ENCODE measurements at regions of chr10 and their contacts with region 1.

Region 1: DNA sequence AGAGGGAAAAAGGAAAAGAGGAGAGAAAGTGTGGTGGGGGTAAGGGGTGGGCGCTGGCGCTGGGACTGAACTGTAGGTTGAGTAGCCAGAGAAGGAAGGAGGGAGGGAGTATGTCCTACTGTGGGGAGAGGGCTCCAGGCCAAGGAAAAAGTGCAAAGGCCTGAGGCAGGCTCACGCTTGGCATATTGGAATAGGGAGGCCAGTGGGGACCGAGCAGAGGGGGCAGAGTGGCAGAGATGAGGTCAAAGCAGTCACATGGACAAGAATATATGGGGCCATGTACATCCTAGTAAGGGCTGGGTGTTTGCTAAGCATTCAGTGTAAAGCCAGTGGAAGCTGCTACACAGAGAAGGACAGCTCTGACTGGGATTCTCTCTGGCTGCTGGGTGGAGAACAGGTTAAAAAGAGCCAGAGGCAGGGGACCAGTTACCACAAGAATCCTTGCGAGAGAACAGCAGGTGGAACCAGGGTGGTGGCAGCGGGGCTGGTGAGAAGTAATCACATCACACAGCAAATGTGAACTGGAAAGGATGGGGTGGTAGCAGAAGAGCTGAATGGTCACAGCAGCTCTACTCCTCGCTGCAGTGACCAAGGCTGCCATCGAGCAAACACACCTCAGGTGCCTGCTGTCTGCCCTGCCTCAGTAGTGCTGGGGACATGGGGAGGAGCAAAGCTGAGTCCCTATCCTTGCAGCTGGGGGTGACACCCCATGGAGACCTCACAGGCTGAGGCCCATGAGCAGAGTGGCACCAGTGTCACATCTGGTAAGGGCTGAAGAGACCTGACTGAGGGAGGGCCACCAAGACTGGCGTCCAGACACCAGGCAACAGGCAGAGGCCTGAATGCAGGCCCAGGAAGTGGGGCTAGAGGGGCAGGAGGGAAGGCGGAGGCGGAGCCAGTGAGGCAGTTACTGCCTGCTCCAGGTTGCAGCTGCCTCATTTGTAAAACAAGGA is 39.5 kb downstream of the FAM53B start:
- DNase-seq: no peak
- H3K4me3 ChIP-seq: no peak overlapping the region
- H3K4me3 Mint-ChIP-seq: no peak overlapping the region
- H3K27ac Mint-ChIP-seq: no peak overlapping the region
- H3K4me1 ChIP-seq: peaks cover 14% of the 10 kb centered on the region; the same call in 1 of the 2 replicates
- H3K4me1 Mint-ChIP-seq: peaks cover 12% of the 10 kb centered on the region
- H3K27me3 ChIP-seq: no peaks in the 10 kb centered on the region
- H3K27me3 Mint-ChIP-seq: no peaks in the 10 kb centered on the region
- CTCF ChIP-seq: no peak

Region 2: DNA sequence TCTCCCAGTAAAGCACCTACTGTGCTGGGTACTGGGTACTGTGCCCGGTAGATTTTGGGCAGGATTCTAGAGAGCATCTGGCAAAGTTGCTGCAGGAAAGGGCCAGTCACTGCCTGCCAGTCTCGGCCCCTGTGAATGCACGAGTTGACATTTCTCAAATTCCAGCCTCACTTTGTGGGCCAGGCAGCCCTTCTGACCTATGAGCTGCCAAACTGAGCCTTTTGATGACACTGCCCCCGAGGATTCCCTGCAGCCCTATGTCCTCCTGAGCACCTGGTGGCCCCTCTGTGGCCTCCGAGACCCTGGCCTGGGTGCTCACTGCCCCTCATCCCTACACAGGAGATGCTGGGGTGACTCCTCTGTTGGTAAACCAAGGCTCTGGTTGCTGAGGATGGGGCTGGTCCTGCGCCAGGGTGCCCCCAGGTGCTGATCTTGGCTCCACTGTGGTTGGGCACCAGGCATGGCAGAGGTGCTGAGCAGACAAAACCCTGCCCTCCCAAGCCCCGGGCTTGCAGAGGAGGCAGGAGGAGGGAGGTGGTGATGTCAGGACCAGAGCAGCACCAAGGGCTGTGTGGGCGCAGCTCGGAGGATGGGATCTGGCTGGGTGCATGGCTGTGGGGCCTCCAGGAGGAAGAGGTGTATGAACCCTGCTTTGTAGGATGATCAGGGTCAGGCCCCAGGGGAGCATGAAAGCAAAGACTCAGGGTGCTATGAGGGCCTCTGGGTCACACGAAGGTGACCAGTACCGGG is 226.9 kb before region 1 on chr10:
- CTCF ChIA-PET with region 1: no interaction called
- POLR2A ChIA-PET with region 1: no interaction called
- intact Hi-C with region 1: no loop called
- DNase-seq: peak; percentile 61 to 62
- H3K4me3 ChIP-seq: no peak overlapping the region
- H3K4me3 Mint-ChIP-seq: peak overlapping the region; percentile 27
- H3K27ac Mint-ChIP-seq: peak overlapping the region; percentile 48
- H3K4me1 ChIP-seq: peaks cover 38% of the 10 kb centered on the region
- H3K4me1 Mint-ChIP-seq: peaks cover 29% of the 10 kb centered on the region
- H3K27me3 ChIP-seq: no peaks in the 10 kb centered on the region
- H3K27me3 Mint-ChIP-seq: no peaks in the 10 kb centered on the region
- CTCF ChIP-seq: no peak

Region 3: GRCh38 chr10:124647421-124648130 is 57.1 kb before region 1 on chr10:
- CTCF ChIA-PET with region 1: no interaction called
- POLR2A ChIA-PET with region 1: no interaction called
- intact Hi-C with region 1: no loop called
- DNase-seq: peak in 1 of 2 experiments; percentile 12
- H3K4me3 ChIP-seq: no peak overlapping the region
- H3K4me3 Mint-ChIP-seq: no peak overlapping the region
- H3K27ac Mint-ChIP-seq: no peak overlapping the region
- H3K4me1 ChIP-seq: no peaks in the 10 kb centered on the region; the same call in 1 of the 2 replicates
- H3K4me1 Mint-ChIP-seq: no peaks in the 10 kb centered on the region
- H3K27me3 ChIP-seq: no peaks in the 10 kb centered on the region
- H3K27me3 Mint-ChIP-seq: no peaks in the 10 kb centered on the region
- CTCF ChIP-seq: peak in 1 of 2 experiments; percentile 16

Region 4: DNA sequence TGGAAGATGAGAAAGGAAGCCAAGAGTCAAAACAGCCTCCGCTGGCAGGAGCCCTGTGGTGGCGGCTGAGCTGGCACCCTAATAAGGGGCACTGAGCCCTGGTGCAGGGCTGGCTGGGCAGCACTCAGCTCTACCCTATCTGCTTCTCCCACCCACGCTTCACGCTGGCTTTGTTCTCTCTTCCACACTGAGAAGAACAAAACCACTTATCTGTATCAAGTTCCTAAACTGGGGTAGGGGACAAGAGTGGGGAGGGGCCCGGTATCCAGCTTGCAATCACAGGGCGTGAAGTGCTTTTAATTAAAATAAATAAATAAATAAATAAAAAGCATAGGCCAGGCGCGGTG is 12.6 kb before region 1 on chr10:
- CTCF ChIA-PET with region 1: interaction called, 11 read pairs
- POLR2A ChIA-PET with region 1: no interaction called
- intact Hi-C with region 1: no loop called
- DNase-seq: no peak
- H3K4me3 ChIP-seq: no peak overlapping the region
- H3K4me3 Mint-ChIP-seq: no peak overlapping the region
- H3K27ac Mint-ChIP-seq: no peak overlapping the region
- H3K4me1 ChIP-seq: no peaks in the 10 kb centered on the region
- H3K4me1 Mint-ChIP-seq: no peaks in the 10 kb centered on the region
- H3K27me3 ChIP-seq: no peaks in the 10 kb centered on the region
- H3K27me3 Mint-ChIP-seq: no peaks in the 10 kb centered on the region
- CTCF ChIP-seq: no peak

Region 5: DNA sequence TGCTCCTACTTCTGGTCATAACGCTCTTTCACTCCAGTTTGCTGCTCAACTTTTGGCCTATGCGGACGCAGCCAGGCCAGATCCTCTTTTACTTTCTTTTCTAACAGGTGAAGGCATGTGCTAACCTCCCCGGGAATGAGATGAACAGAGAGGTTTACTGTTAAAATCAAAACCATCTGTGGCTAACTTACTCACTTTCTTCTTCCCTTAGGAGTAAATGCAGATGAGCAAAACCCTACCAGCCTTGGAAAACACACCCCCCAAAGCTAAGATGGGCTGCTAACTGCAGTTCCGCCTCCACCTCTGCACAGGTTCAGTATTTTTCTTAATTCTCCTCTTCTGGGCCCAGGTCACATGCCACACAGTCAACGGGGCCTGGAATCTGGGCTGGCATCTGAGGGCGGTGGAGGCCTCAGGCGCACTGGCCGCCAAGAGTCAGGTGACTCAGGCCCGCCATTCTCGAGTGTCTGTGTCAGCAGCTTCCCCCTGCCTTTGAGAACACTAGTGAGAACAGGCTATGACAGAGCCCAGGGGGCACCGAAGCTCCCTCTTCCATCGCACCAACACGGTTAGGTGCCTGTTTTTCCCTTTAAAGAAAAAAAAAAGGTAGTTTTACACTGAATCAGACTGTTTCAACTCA is 28.3 kb after region 1 on chr10:
- CTCF ChIA-PET with region 1: no interaction called
- POLR2A ChIA-PET with region 1: no interaction called
- intact Hi-C with region 1: no loop called
- DNase-seq: no peak
- H3K4me3 ChIP-seq: no peak overlapping the region
- H3K4me3 Mint-ChIP-seq: no peak overlapping the region
- H3K27ac Mint-ChIP-seq: no peak overlapping the region
- H3K4me1 ChIP-seq: no peaks in the 10 kb centered on the region
- H3K4me1 Mint-ChIP-seq: no peaks in the 10 kb centered on the region
- H3K27me3 ChIP-seq: no peaks in the 10 kb centered on the region
- H3K27me3 Mint-ChIP-seq: no peaks in the 10 kb centered on the region
- CTCF ChIP-seq: no peak

Region 6: GRCh38 chr10:124763267-124763666 is 58.6 kb after region 1 on chr10:
- CTCF ChIA-PET with region 1: no interaction called
- POLR2A ChIA-PET with region 1: no interaction called
- intact Hi-C with region 1: no loop called
- DNase-seq: no peak
- H3K4me3 ChIP-seq: no peak overlapping the region
- H3K4me3 Mint-ChIP-seq: no peak overlapping the region
- H3K27ac Mint-ChIP-seq: no peak overlapping the region
- H3K4me1 ChIP-seq: no peaks in the 10 kb centered on the region
- H3K4me1 Mint-ChIP-seq: no peaks in the 10 kb centered on the region
- H3K27me3 ChIP-seq: no peaks in the 10 kb centered on the region
- H3K27me3 Mint-ChIP-seq: no peaks in the 10 kb centered on the region
- CTCF ChIP-seq: no peak

Measured in Caco-2 (cell line).